Right ventricle myocardium inferior (tissue), 1 donor: ENCODE measurements at regions of chr1 and their contacts with region 1.

Region 1: GRCh38 chr1:109099938-109100773 is 9.6 kb downstream of the TMEM167B start:
- DNase-seq: peak; percentile 98
- ATAC-seq: peak; percentile 99

Region 2: DNA sequence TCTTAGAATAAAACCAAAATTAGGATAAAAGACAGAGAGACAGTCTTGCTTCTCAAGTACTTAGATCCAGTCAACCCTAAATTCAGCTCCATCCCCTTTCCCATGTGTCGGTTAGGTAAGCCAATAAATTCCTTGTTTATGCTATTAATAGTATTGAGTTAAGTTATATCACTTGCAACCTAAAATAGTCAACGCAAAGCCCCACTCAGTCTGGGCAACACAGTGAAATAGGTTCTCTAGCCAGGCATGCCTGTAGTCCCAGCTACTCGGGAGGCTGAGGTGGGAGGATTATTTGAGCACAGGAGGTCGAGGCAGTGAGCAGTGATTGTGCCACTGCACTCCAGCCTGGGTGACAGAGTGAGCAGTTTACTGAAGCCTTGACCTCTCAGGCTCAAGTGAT is 39.0 kb before region 1 on chr1:
- intact Hi-C with region 1: no loop called
- DNase-seq: no peak
- ATAC-seq: peak; percentile 42

Region 3: DNA sequence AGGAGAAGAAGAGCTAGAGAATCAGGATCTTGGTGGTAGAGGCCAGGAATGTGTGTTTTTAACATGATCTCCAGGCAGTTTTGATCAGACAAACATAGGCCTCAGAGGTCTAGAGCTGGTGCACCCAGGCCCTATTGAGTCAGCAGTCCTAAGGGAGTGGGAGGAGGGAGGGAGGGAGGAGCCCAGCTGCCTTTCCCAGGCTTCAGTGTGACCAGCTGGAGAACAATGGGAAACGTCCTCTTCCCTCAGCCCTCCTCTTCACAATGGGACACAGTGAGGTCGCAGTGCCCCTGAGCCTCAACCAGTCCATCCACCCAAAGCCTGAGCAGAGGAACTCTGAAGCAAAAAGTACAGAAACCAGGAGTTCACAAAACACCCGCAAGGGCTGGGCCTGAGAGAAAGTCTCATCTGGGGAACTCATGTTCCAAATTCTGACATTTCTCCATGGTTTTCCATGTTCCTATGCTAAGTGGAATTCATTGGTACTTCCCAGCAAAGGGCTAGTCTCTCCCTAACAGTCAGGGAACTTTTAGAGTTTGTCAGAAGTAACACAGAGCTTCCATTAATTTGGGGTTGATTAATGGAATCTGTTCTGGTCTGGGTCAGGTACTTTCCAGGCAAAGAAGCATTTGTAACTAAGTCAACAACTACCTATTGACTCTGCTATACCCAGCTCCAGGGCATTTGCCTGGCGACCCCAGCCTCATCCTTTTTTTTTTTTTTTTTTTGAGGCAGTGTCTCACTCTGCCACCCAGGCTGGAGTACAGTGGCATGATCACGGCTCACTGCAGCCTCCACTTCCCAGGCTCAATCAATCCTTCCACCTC is 51.2 kb after region 1 on chr1:
- intact Hi-C with region 1: no loop called
- DNase-seq: no peak
- ATAC-seq: peak; percentile 87

Region 4: GRCh38 chr1:109213785-109214468 is 113.8 kb after region 1 on chr1 and contains the start of gene SARS1:
- intact Hi-C with region 1: loop called (anchors 2 kb)
- DNase-seq: peak; percentile 93
- ATAC-seq: peak; percentile 97
- total RNA-seq, gene SARS1: 97.6 TPM